Psoas muscle (tissue), 8 donors: ENCODE measurements at regions of chr20 and their contacts with region 1.

Region 1: GRCh38 chr20:19212821-19213502 is 520 bp downstream of the SLC24A3 start:
- DNase-seq: peak; percentile 75 to 88
- ATAC-seq: peak; percentile 87 to 95 (median 92)
- H3K4me3 ChIP-seq: peak overlapping the region; percentile 80
- H3K27ac ChIP-seq: peak overlapping the region; percentile 69
- H3K4me1 ChIP-seq: peaks cover 18% of the 10 kb centered on the region
- H3K27me3 ChIP-seq: no peaks in the 10 kb centered on the region
- CTCF ChIP-seq: peak; percentile 64

Region 2: DNA sequence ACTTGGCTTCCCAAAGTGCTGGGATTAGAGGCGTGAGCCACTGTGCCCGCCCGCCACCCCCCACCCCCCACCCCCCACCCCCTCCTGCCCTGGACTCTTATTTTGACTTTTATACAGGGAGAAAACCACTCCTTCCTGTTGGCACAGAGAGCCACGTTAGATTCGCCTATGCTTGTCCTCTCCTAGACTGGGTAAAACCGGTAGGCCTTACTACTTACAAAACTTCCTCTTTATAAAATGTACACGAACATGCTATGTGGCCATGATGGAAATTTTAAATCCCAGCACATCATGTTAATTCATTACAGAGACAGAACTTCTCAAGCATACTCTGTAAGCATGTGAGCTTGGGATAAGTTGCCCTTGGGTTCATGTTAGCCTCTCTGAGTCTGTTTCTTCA is 123.7 kb after region 1 on chr20:
- intact Hi-C with region 1: loop called (anchors 5 to 10 kb)
- DNase-seq: no peak
- ATAC-seq: no peak
- H3K4me3 ChIP-seq: no peak overlapping the region
- H3K27ac ChIP-seq: peak overlapping the region; percentile 1
- H3K4me1 ChIP-seq: peaks cover 33% of the 10 kb centered on the region
- H3K27me3 ChIP-seq: no peaks in the 10 kb centered on the region
- CTCF ChIP-seq: no peak

Region 3: GRCh38 chr20:19347943-19348456 is 135.0 kb after region 1 on chr20:
- intact Hi-C with region 1: loop called in 1 of 2 experiments (anchors 10 kb)
- DNase-seq: peak in 1 of 2 donors; percentile 60
- ATAC-seq: peak; percentile 69 to 84 (median 81)
- H3K4me3 ChIP-seq: peak overlapping the region; percentile 47
- H3K27ac ChIP-seq: peak overlapping the region; percentile 82
- H3K4me1 ChIP-seq: peaks cover 35% of the 10 kb centered on the region
- H3K27me3 ChIP-seq: no peaks in the 10 kb centered on the region
- CTCF ChIP-seq: no peak

Region 4: DNA sequence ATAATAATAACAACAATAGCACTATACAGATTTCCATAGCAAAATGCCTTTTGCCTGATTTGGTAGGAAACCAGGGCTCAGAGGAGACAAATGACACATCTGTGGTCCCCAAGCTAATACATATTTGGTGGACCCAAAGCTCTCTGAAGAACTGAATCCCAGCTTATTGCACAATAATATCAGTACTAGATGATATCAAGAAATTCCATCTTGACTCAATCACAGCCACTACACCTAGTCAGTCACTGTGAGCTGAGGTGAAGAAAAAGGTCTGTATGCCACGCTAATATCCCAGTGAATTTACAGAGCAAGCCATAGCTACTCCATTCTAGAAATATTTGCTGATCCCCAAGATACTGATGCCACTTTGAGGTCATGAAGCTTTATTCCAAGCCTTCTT is 274.5 kb after region 1 on chr20:
- intact Hi-C with region 1: loop called in 1 of 2 experiments (anchors 5 kb)
- DNase-seq: no peak
- ATAC-seq: no peak
- H3K4me3 ChIP-seq: no peak overlapping the region
- H3K27ac ChIP-seq: no peak overlapping the region
- H3K4me1 ChIP-seq: peaks cover 18% of the 10 kb centered on the region
- H3K27me3 ChIP-seq: no peaks in the 10 kb centered on the region
- CTCF ChIP-seq: no peak

Region 5: GRCh38 chr20:19583532-19584175 is 370.7 kb after region 1 on chr20:
- intact Hi-C with region 1: loop called in 1 of 2 experiments (anchors 2 kb)
- DNase-seq: peak; percentile 59 to 84
- ATAC-seq: peak; percentile 93 to 97 (median 94)
- H3K4me3 ChIP-seq: no peak overlapping the region
- H3K27ac ChIP-seq: no peak overlapping the region
- H3K4me1 ChIP-seq: peaks cover 5% of the 10 kb centered on the region
- H3K27me3 ChIP-seq: no peaks in the 10 kb centered on the region
- CTCF ChIP-seq: peak; percentile 92